ENCODE measurements at regions of chr5 and their contacts with region 1.

Region 1: DNA sequence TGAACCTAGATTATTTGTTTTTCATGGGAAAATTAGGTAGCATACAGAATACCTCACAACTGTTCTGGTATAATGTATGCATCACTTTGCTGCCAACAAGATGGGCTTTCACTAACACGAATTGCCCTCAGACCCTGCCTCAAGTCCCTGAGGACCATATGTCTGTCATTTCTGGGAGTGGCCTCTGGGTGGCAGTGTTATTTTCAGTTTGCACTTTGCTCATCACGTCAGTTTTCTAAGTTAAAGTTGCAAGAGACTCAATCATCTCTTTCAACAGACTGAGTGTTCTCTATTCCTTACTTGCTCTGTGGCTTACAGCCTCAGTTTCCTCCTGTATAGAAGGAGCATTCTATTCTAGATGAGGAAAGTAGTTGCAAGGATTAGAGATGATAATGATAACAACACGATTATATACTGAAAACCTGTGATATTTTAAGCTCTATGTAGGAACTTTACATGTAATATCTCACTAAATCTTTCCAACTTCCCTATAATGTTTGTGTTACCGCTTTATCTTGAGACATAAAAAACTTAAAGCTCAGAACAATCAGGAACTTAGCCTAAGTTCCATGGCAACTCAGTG is 55.7 kb downstream of the TSSK1B start:
- DNase-seq: peak; percentile 44
- ATAC-seq: peak; percentile 58 to 59

Region 2: DNA sequence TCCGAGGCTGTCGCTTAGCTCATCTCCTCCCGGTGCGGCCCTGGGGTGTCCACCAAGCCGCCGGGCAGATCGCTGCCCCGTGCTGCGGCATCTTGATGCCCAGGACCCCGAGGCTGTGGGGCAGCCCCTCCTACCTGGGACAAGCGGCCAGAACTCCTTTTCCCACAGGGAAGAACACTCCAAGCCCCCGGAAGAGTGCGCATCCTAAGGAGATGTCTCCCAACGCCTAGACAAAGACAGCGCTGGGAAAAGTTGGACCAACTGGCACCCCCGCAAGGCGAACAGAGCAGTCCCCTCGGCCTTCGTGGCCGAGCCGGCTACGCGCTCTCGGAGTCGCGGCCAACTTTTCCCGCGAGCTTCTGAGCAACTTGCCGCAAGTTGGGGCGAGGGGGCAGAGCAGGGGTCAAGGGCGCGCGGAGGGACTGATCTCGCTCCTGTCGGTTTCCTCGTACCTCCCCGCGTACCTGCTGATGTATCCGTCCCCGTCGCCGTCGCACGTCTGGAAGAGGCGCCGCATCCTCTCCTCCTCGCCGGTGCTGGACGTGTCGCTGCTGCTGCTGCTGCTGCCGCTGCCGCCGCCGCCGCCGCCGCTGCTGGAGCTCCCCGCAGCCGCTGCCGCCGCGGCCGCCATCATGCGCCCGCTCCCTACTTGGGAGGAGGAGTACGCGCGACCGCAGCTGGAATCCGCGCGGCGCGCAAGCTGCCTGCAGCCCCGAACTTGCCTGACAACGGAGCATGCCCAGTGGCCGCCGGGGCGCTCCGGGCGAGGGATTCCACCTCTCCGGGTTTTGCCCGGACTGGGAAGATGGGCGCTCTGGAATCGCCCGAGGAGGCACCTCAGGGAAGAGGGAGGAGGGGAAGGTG is 109.0 kb after region 1 on chr5 and contains the start of gene MCC:
- intact Hi-C with region 1: no loop called
- DNase-seq: peak; percentile 88
- ATAC-seq: peak; percentile 95 to 97
- total RNA-seq, gene MCC: 18.2 to 28.6 TPM

Region 3: GRCh38 chr5:113502073-113502472 is 123.0 kb after region 1 on chr5:
- intact Hi-C with region 1: loop called (anchors 5 to 10 kb)
- DNase-seq: no peak
- ATAC-seq: no peak

Region 4: DNA sequence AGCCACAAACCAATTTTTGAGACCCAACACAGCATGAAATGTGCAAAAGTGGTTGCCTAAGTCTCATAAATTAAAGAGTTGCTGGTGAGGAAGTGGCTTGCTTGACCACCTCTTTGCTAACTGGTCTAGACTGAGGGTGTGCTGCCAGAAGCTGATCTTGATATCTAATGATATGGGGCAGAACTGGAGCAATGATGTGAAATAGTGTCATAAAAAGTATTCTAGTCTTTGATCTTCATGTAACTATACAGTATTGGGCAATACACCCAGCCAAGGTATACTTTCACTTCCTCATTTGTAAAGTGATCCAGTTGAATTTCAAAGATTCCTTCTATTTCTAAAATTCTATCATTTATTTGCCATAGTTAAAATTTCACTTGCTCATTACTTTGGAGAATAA is 128.6 kb after region 1 on chr5:
- intact Hi-C with region 1: loop called (anchors 2 to 10 kb)
- DNase-seq: no peak
- ATAC-seq: no peak

Region 5: GRCh38 chr5:113513384-113514288 is 134.6 kb after region 1 on chr5 and contains the start of gene YTHDC2:
- intact Hi-C with region 1: loop called (anchors 2 to 10 kb)
- DNase-seq: peak; percentile 92
- ATAC-seq: peak; percentile 99
- total RNA-seq, gene YTHDC2: 12.6 to 20.3 TPM